ENCODE measurements at regions of chr2 and their contacts with region 1.

Region 1: GRCh38 chr2:66429071-66429477 is 5.9 kb upstream of the MEIS1 start:
- DNase-seq: no peak
- ATAC-seq: peak in 1 of 2 donors; percentile 22
- H3K4me3 ChIP-seq: no peak overlapping the region
- H3K27ac ChIP-seq: no peak overlapping the region
- H3K4me1 ChIP-seq: peaks cover 0 to 13% of the 10 kb centered on the region in 2 donors
- H3K27me3 ChIP-seq: peaks cover 25 to 44% (median 33%) of the 10 kb centered on the region in 3 donors
- CTCF ChIP-seq: peak; percentile 62 to 86 (median 77)
- POLR2A ChIP-seq: no peak

Region 2: GRCh38 chr2:65999796-66000195 is 429.3 kb before region 1 on chr2:
- in situ Hi-C with region 1: no loop called
- intact Hi-C with region 1: no loop called
- DNase-seq: no peak
- ATAC-seq: no peak
- H3K4me3 ChIP-seq: no peak overlapping the region
- H3K27ac ChIP-seq: no peak overlapping the region
- H3K4me1 ChIP-seq: no peaks in the 10 kb centered on the region
- H3K27me3 ChIP-seq: no peaks in the 10 kb centered on the region
- CTCF ChIP-seq: no peak
- POLR2A ChIP-seq: no peak

Region 3: DNA sequence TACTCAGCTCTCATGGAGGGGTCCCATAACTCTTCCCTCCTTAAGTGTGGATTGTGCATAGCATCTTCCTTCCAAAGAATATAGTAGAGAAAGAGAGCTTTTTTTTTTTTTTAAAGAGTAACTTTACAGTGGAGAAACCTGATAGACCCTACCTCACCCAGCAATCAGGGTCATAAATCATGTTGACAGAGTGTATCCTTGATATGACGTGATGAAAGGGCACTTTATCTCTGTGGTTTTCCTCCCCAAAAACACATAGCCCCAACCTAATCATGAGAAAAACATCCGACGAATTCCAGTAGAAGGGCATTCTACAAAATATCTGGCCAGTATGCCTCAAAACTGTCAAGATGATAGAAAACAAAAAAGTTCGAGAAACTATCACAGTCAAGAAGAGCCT is 23.6 kb before region 1 on chr2:
- in situ Hi-C with region 1: no loop called
- intact Hi-C with region 1: no loop called
- DNase-seq: no peak
- ATAC-seq: no peak
- H3K4me3 ChIP-seq: no peak overlapping the region
- H3K27ac ChIP-seq: no peak overlapping the region
- H3K4me1 ChIP-seq: no peaks in the 10 kb centered on the region
- H3K27me3 ChIP-seq: no peaks in the 10 kb centered on the region
- CTCF ChIP-seq: no peak
- POLR2A ChIP-seq: no peak

Region 4: DNA sequence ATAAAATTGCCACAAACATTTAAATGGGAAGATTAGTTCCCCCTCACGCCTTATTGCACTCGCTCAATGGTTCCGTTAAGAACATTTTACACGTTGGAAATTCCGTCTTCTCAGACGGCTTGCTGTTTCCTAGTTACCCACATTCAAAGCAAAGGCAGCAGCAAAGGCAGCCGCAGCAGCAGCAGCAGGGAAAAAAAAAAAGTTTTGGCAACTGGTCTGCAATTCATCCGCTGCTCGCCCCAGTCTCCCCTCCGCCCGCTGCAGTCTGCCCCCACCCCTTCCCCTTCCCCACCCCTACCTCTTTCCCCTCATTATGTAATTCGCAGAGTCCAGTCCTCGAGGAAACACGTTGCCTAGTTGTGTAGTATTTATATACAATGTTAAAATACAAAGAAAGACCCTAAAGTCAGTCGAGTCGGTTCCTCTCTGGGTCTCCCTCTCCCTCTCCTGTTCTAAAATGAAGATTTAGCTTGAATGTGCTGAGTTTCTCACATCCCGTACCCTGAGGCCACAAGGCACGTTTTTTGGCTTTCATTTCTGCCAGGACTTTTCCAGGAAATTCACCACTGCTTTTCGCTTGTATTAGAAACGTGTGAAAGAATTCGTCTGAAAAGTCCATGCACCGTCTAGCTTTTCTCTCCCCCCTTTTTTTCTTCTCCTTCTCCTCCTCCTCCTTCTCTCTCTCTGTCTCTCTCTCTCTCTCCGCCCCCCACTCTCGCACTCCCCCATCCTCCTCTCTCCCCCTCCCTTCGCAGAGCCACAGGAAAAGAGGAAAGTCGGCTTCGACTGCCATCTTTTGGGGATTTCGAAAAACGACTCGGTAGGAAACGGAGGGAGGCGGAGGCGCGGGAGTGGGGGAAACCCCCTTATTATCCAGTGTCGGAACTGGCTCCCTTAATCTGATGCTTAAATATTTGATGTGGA is 145.9 kb after region 1 on chr2:
- in situ Hi-C with region 1: loop called in 2 of 4 experiments (anchors 5 kb)
- intact Hi-C with region 1: loop called (anchors 1 kb)
- DNase-seq: peak in 1 of 2 donors; percentile 17
- ATAC-seq: peak in 1 of 2 donors; percentile 43
- H3K4me3 ChIP-seq: peak overlapping the region; percentile 38 to 67 (median 50)
- H3K27ac ChIP-seq: no peak overlapping the region
- H3K4me1 ChIP-seq: peaks cover 19 to 30% of the 10 kb centered on the region in 2 donors
- H3K27me3 ChIP-seq: peaks cover 71 to 78% (median 75%) of the 10 kb centered on the region in 3 donors
- CTCF ChIP-seq: no peak
- POLR2A ChIP-seq: no peak

Region 5: DNA sequence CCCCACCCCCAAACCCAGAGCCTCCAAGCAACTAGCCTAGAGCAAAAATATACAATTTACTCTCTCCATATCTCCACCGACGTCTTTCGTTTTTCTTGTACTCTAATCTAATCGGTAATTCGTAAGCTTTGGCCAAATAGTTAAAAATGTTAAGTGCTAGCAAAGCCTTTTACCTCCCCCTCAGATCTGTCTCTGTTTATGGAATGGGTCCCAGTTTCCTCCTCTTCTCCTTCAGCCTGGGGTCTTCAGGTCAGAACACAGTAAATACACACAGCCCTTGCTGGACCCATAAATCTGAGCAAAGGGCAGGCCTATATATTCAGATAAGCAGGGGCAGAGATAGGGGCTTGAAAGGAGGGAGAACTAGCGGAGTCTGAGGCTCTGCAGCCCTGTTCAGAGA is 273.2 kb after region 1 on chr2:
- in situ Hi-C with region 1: no loop called
- intact Hi-C with region 1: no loop called
- DNase-seq: no peak
- ATAC-seq: no peak
- H3K4me3 ChIP-seq: no peak overlapping the region
- H3K27ac ChIP-seq: no peak overlapping the region
- H3K4me1 ChIP-seq: no peaks in the 10 kb centered on the region
- H3K27me3 ChIP-seq: no peaks in the 10 kb centered on the region
- CTCF ChIP-seq: no peak
- POLR2A ChIP-seq: no peak

Region 6: GRCh38 chr2:66851449-66851872 is 422.4 kb after region 1 on chr2:
- in situ Hi-C with region 1: no loop called
- intact Hi-C with region 1: no loop called
- DNase-seq: no peak
- ATAC-seq: no peak
- H3K4me3 ChIP-seq: no peak overlapping the region
- H3K27ac ChIP-seq: no peak overlapping the region
- H3K4me1 ChIP-seq: no peaks in the 10 kb centered on the region
- H3K27me3 ChIP-seq: peaks cover 0 to 2% (median 0%) of the 10 kb centered on the region in 3 donors
- CTCF ChIP-seq: no peak
- POLR2A ChIP-seq: no peak

Region 7: DNA sequence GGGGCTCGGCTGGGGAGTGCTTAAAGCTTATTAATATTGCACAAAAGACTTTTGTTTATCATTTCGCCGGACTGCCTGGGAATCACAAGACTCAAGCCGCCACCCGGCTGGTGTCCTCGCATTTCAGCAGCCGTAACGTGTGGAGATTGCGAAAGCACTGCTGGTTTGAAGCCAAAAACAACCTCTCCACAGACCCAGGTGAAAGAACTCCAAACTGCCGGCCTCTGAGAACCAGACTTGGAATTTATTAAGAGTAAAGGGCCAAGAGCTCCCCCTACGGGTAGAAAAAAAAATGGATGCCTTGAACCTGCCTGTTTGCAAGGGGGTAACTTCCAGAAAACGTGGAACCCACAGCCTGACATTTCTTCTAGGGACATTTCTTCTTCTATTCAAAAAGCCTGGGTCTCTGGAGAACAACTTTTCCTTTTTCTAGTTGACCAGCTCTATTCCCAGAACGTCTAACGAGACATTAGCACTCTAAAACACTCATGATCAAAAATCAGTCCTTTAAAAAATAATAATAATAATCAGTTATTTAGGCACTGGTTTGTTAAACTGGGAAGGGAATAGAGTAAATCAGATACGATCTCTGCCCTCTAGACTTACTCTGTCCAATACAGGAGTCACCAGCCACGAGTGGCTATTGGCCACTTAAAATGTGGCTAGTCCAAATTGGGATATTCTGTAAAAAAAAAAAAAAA is 1417.4 kb after region 1 on chr2:
- in situ Hi-C with region 1: loop called in 3 of 4 experiments (anchors 5 to 10 kb)
- intact Hi-C with region 1: loop called (anchors 1 kb)
- DNase-seq: peak; percentile 64 to 82
- ATAC-seq: peak; percentile 90 to 98
- H3K4me3 ChIP-seq: peak overlapping the region; percentile 8 to 28 (median 14)
- H3K27ac ChIP-seq: no peak overlapping the region
- H3K4me1 ChIP-seq: peaks cover 6 to 7% of the 10 kb centered on the region in 2 donors
- H3K27me3 ChIP-seq: no peaks in the 10 kb centered on the region
- CTCF ChIP-seq: peak; percentile 59 to 78 (median 62)
- POLR2A ChIP-seq: no peak

Measured in gastrocnemius medialis (tissue), 4 donors.